ENCODE measurements at regions of chr21 and their contacts with region 1.

Region 1: GRCh38 chr21:17387030-17387617 is 125.7 kb upstream of the CXADR start:
- DNase-seq: peak; percentile 14
- ATAC-seq: peak; percentile 65
- H3K4me3 Mint-ChIP-seq: no peak overlapping the region
- H3K27ac Mint-ChIP-seq: no peak overlapping the region
- H3K4me1 Mint-ChIP-seq: peaks cover 18% of the 10 kb centered on the region
- H3K27me3 Mint-ChIP-seq: peaks cover 2% of the 10 kb centered on the region; the same call in 1 of the 2 replicates
- CTCF ChIP-seq: peak; percentile 76

Region 2: DNA sequence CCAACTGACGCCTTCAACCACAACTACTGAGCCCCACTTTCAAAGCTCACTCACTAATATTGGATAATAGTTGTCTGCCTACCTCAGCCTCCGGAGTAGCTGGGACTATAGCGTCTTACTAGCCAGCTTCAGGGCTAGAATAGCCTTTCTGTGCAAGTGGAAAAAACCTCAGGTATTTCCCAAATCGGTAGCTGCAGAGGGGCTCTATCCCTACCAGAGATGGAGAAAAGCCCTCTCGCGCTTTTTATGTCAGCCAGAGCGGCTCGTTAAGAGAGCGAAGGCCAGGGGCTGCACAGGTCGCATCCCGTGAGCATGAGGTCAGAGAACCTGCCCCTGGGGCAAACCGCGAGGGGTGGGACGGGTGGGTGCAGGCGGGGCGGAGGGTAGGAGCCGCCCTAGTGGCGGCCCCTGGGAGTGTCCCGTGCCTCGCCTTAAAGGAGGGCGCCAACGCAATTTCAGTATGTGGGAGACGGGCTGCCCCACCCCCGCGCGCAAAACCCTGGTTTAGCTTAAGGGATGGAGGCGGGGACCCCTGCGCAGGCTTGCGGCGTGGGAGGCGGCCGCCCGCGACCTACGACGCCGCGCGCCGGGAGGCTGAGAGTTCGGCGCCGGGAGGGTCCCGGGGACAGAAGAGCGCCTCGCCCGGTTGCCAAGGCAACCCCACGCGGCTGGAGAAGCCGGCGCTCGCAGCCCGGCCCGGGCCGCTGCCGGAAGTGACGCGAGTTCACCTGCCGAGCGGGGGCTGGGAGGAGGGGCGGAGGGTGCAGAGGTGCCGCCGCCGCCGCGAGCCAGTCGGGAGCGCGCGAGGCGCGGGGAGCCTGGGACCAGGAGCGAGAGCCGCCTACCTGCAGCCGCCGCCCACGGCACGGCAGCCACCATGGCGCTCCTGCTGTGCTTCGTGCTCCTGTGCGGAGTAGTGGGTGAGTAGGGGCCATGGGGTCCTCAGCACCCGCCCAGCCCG is 125.4 kb after region 1 on chr21 and contains the start of gene CXADR:
- CTCF ChIA-PET with region 1: interaction called, 14 read pairs
- POLR2A ChIA-PET with region 1: no interaction called
- DNase-seq: peak; percentile 90
- ATAC-seq: peak; percentile 83
- H3K4me3 Mint-ChIP-seq: peak within 1 kb of the TSS; percentile 85
- H3K27ac Mint-ChIP-seq: peak within 1 kb of the TSS; percentile 96
- H3K4me1 Mint-ChIP-seq: peaks cover 47% of the 10 kb centered on the region
- H3K27me3 Mint-ChIP-seq: no peaks in the 10 kb centered on the region
- CTCF ChIP-seq: peak; percentile 79
- total RNA-seq, gene CXADR: 119 to 125 TPM (median 119 TPM) in 3 replicates

Region 3: DNA sequence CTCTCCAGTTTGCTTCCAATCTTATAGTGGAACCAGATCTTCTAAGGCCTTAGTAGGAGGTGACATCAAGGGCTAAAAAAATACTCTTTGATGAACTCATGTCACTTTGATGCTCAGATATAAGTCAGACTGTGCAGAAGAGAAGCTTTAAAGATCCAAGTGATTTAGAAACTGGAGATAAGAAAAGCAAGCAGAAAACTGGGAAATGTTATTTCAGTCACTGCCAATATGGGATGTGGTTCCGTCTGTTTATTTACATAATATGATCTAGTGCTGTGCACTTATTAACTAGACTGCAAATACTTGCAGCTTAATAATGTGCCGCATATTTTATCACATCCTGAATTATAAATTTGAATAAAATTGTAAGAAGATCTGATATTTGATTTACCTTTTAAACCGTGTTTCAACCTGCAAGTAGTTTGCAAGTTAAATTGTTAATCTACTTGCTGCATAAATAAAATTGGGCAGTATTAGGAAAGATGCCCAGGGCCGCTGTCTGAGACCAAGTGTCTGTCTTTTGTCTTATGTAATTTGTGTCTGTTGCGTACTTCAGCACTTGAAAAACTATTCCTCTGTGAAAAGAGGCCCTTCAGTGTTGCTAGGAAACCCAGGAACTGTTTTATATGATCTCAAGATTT is 155.4 kb after region 1 on chr21:
- CTCF ChIA-PET with region 1: no interaction called
- POLR2A ChIA-PET with region 1: no interaction called
- DNase-seq: no peak
- ATAC-seq: no peak
- H3K4me3 Mint-ChIP-seq: no peak overlapping the region
- H3K27ac Mint-ChIP-seq: peak overlapping the region; percentile 19; the same call in 1 of the 2 replicates
- H3K4me1 Mint-ChIP-seq: peaks cover 61% of the 10 kb centered on the region
- H3K27me3 Mint-ChIP-seq: no peaks in the 10 kb centered on the region
- CTCF ChIP-seq: no peak

Region 4: DNA sequence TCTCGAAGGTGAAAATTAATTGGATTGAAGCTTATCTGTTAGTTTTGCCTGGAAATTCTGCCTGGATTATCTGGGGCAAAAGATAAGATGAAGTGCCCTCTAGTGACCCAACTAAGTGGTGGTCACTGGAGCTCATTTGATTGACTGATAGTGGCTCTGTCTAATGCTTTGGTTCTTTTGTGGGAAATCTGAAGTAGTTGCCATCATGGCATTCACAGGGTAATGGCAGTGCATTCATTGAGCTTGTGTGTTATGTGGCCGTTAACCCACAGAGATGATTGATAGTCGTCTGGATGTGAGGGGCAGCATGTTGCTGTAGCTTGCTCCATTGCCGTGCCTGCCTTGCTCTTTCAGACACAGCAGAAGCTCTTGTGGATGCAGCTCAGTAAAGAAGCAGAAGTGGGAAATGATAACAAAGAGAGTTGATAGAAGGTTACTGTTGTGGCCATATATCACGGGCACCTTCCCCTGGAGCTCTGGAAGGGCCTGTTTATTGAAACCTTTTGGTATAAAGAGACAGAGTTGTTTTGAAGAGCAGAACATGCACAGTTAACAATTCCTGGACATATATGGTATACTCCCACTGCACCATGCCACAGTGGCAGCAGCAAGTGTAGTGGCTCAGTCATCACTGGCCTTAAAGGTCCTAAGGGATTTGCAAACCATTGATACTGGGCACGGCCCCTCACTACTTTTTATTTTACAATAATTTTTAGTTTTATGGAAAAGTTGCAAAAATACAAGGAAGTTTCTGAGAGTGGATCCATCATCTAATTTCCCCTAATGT is 167.7 kb after region 1 on chr21:
- CTCF ChIA-PET with region 1: interaction called, 71 read pairs
- POLR2A ChIA-PET with region 1: interaction called, 4 read pairs
- DNase-seq: no peak
- ATAC-seq: peak; percentile 61
- H3K4me3 Mint-ChIP-seq: no peak overlapping the region
- H3K27ac Mint-ChIP-seq: peak overlapping the region; percentile 69
- H3K4me1 Mint-ChIP-seq: peaks cover 8% of the 10 kb centered on the region
- H3K27me3 Mint-ChIP-seq: no peaks in the 10 kb centered on the region
- CTCF ChIP-seq: no peak

Region 5: GRCh38 chr21:17585875-17586450 is 198.8 kb after region 1 on chr21:
- CTCF ChIA-PET with region 1: interaction called, 54 read pairs
- POLR2A ChIA-PET with region 1: no interaction called
- DNase-seq: no peak
- ATAC-seq: no peak
- H3K4me3 Mint-ChIP-seq: no peak overlapping the region
- H3K27ac Mint-ChIP-seq: no peak overlapping the region
- H3K4me1 Mint-ChIP-seq: peaks cover 6% of the 10 kb centered on the region
- H3K27me3 Mint-ChIP-seq: no peaks in the 10 kb centered on the region
- CTCF ChIP-seq: peak; percentile 32; the same call in 1 of the 2 replicates